Stomach (tissue), 19 donors: ENCODE measurements at regions of chr7 and their contacts with region 1.

Region 1: DNA sequence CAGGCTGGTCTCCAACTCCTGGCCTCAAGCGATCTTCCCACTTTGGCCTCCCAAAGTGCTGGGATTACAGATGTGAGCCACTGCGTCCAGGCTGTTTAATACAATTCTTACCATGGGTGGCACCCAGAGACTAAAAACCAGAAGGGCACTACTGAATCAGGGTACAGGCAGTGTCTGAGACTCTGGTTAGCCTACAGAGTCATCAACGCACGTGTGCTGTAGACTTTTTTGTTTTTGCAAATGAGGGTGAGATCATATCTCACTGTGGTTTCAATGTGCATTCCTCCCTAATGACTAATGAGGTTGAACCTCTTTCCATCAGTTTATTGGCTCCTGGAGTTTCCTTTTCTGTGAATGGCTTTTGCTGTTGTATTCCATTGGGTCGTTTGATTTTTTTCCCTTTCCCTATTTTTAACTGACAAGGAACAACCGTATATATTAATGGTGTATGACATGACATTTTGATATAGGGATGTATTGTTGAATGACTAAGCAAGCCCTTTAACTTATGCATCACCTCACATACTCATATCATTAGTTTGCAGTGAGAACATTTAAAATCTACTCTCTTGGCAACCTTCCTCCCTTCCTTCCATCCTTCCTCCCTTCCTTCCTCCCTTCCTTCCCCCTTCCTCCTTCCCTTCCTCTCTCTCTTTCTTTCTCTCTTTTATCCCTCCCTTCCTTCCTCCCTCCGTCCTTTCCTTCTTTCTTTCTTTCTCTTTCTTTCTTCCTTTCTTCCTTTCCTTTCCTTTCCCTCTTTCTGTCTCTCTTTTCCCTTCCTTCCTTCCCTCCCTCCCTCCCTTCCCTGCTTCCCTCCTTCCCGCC is 9.3 kb upstream of the METTL27 start:
- DNase-seq: peak in 1 of 2 donors; percentile 81
- H3K4me3 ChIP-seq: no peak overlapping the region
- H3K27ac ChIP-seq: peak overlapping the region in 4 of 5 donors; percentile 47 to 71 (median 57)
- H3K4me1 ChIP-seq: peaks cover 6 to 29% (median 16%) of the 10 kb centered on the region in 4 donors
- H3K27me3 ChIP-seq: peaks cover 0 to 15% (median 0%) of the 10 kb centered on the region in 3 donors
- CTCF ChIP-seq: no peak
- EP300 ChIP-seq: no peak
- POLR2A ChIP-seq: no peak

Region 2: GRCh38 chr7:73342645-73343044 is 509.0 kb before region 1 on chr7:
- intact Hi-C with region 1: no loop called
- DNase-seq: peak; percentile 29 to 84
- H3K4me3 ChIP-seq: no peak overlapping the region
- H3K27ac ChIP-seq: no peak overlapping the region
- H3K4me1 ChIP-seq: peaks cover 0 to 10% (median 0%) of the 10 kb centered on the region in 4 donors
- H3K27me3 ChIP-seq: peaks cover 0 to 8% (median 0%) of the 10 kb centered on the region in 3 donors
- CTCF ChIP-seq: peak in 5 of 7 experiments; percentile 29 to 55 (median 31)
- EP300 ChIP-seq: no peak
- POLR2A ChIP-seq: no peak

Region 3: GRCh38 chr7:73667344-73668102 is 184.1 kb before region 1 on chr7 and contains the start of gene VPS37D:
- intact Hi-C with region 1: no loop called
- DNase-seq: peak; percentile 96 to 97
- H3K4me3 ChIP-seq: peak within 1 kb of the TSS; percentile 64 to 85 (median 66)
- H3K27ac ChIP-seq: peak within 1 kb of the TSS in 2 of 5 donors; percentile 67 to 77
- H3K4me1 ChIP-seq: peaks cover 18 to 27% (median 22%) of the 10 kb centered on the region in 4 donors
- H3K27me3 ChIP-seq: peaks cover 0 to 27% (median 5%) of the 10 kb centered on the region in 3 donors
- CTCF ChIP-seq: peak in 3 of 7 experiments; percentile 76 to 97 (median 79)
- EP300 ChIP-seq: no peak
- POLR2A ChIP-seq: no peak
- total RNA-seq, gene VPS37D: 0.55 TPM in 1 of 5 donors, not detected in the others

Region 4: GRCh38 chr7:73815446-73815845 is 36.2 kb before region 1 on chr7:
- intact Hi-C with region 1: loop called (anchors 2 kb)
- DNase-seq: no peak
- H3K4me3 ChIP-seq: no peak overlapping the region
- H3K27ac ChIP-seq: no peak overlapping the region
- H3K4me1 ChIP-seq: no peaks in the 10 kb centered on the region
- H3K27me3 ChIP-seq: peaks cover 0 to 57% (median 8%) of the 10 kb centered on the region in 3 donors
- CTCF ChIP-seq: no peak
- EP300 ChIP-seq: no peak
- POLR2A ChIP-seq: no peak